ENCODE measurements at regions of chr20 and their contacts with region 1.

Region 1: DNA sequence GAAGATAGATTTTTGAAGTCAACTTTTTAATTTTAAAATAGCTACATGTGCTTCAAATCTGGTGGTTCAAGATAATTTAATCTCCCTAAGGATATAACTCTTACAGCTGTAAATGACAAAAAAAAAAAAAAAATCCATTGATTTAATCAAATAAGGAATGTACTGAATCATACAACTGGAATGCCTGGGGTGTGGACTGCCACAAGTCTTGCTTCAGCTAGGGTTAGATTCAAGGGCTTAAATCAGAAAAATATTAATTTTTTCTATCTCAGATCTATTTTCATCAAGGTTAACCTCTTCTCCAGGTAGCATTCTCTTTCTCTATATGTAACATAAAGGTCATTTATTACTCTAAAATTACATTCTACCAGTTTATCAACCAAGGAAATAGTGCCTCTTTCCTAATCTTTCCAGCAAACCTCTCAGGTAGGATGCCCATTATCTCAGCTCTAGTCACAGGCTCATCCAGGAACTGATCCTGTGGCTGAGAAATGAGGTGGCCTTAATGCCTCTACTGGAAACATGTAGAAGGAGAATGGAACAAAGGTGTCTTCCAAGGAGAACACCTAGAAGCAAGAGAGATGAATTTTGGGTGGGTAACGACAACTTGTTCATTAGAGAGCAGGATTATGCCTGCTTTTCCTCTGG is 466.9 kb downstream of the CBLN4 start:
- DNase-seq: no peak
- ATAC-seq: no peak
- H3K4me3 Mint-ChIP-seq: no peak overlapping the region
- H3K27ac Mint-ChIP-seq: no peak overlapping the region
- H3K4me1 Mint-ChIP-seq: no peaks in the 10 kb centered on the region
- H3K27me3 Mint-ChIP-seq: no peaks in the 10 kb centered on the region

Region 2: GRCh38 chr20:55211481-55211880 is 326.9 kb before region 1 on chr20:
- CTCF ChIA-PET with region 1: no interaction called
- POLR2A ChIA-PET with region 1: no interaction called
- intact Hi-C with region 1: no loop called
- DNase-seq: no peak
- ATAC-seq: no peak
- H3K4me3 Mint-ChIP-seq: no peak overlapping the region
- H3K27ac Mint-ChIP-seq: no peak overlapping the region
- H3K4me1 Mint-ChIP-seq: no peaks in the 10 kb centered on the region
- H3K27me3 Mint-ChIP-seq: no peaks in the 10 kb centered on the region

Region 3: GRCh38 chr20:55472699-55473098 is 65.7 kb before region 1 on chr20:
- CTCF ChIA-PET with region 1: no interaction called
- POLR2A ChIA-PET with region 1: no interaction called
- intact Hi-C with region 1: loop called in 1 of 2 experiments (anchors 10 kb)
- DNase-seq: no peak
- ATAC-seq: no peak
- H3K4me3 Mint-ChIP-seq: no peak overlapping the region
- H3K27ac Mint-ChIP-seq: no peak overlapping the region
- H3K4me1 Mint-ChIP-seq: no peaks in the 10 kb centered on the region
- H3K27me3 Mint-ChIP-seq: no peaks in the 10 kb centered on the region

Region 4: DNA sequence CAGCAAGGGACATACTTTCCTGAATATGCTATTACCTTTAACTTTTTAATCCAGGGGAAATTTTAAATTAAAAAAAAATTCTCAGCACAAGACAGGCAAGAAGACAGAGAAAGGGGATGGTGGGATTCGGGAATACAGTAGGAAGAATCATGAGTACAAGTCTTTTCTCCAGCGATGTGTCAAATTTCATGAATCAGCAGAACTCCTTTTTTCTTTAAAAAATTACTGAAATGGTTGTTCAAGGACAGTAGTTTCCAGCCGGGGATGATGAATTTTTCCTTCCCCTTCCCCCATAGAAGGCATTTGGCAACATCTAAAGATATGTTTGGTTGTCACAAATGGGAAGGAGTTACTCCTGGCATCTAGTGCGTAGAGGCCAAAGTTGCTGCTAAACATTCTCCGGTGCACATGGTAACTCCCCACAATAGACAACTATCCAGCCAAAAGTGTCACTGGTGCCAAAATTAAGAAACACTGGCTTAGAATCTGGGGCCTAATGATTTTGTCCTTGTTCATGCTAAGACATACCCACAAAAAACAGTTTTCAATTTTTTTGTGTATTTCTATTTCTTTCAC is 16.8 kb after region 1 on chr20:
- CTCF ChIA-PET with region 1: no interaction called
- POLR2A ChIA-PET with region 1: no interaction called
- intact Hi-C with region 1: loop called in 1 of 2 experiments (anchors 2 kb)
- DNase-seq: no peak
- ATAC-seq: no peak
- H3K4me3 Mint-ChIP-seq: no peak overlapping the region
- H3K27ac Mint-ChIP-seq: no peak overlapping the region
- H3K4me1 Mint-ChIP-seq: no peaks in the 10 kb centered on the region
- H3K27me3 Mint-ChIP-seq: no peaks in the 10 kb centered on the region

Region 5: GRCh38 chr20:55586610-55587009 is 48.2 kb after region 1 on chr20:
- CTCF ChIA-PET with region 1: no interaction called
- POLR2A ChIA-PET with region 1: no interaction called
- intact Hi-C with region 1: loop called in 1 of 2 experiments (anchors 10 kb)
- DNase-seq: no peak
- ATAC-seq: no peak
- H3K4me3 Mint-ChIP-seq: no peak overlapping the region
- H3K27ac Mint-ChIP-seq: no peak overlapping the region
- H3K4me1 Mint-ChIP-seq: no peaks in the 10 kb centered on the region
- H3K27me3 Mint-ChIP-seq: no peaks in the 10 kb centered on the region